ENCODE measurements at regions of chr11 and their contacts with region 1.

Region 1: GRCh38 chr11:85076373-85077330 is 550.5 kb downstream of the DLG2 start:
- DNase-seq: peak; percentile 83
- H3K4me3 ChIP-seq: no peak overlapping the region
- H3K27ac ChIP-seq: no peak overlapping the region
- H3K4me1 ChIP-seq: peaks cover 15% of the 10 kb centered on the region
- H3K27me3 ChIP-seq: peaks cover 16% of the 10 kb centered on the region
- CTCF ChIP-seq: no peak

Region 2: DNA sequence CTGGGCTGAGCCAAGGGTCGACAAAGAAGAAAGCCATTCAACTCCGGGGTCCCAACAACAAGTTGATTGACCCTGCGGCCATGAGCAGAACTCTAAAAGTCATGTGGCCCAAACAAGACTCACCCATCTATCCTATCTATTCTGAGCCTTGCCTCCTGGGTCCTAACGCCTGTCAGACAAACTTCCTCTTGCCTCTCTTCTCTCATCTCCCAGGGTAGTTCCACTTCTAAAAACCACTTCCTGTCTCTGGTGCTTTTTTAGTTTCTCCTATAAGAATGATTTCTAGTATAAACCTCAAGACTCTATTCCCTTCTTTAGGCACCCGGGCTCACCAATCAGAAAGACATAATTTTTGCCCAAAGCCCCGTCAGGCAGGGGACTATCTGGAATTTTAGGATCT is 20.3 kb after region 1 on chr11:
- CTCF ChIA-PET with region 1: interaction called, 21 read pairs
- dilution Hi-C with region 1: no loop called
- in situ Hi-C with region 1: no loop called
- intact Hi-C with region 1: no loop called
- DNase-seq: no peak
- H3K4me3 ChIP-seq: no peak overlapping the region
- H3K27ac ChIP-seq: no peak overlapping the region
- H3K4me1 ChIP-seq: no peaks in the 10 kb centered on the region
- H3K27me3 ChIP-seq: peaks cover 15% of the 10 kb centered on the region
- CTCF ChIP-seq: no peak

Region 3: GRCh38 chr11:85256433-85256832 is 179.8 kb after region 1 on chr11:
- CTCF ChIA-PET with region 1: no interaction called
- dilution Hi-C with region 1: no loop called
- in situ Hi-C with region 1: no loop called
- intact Hi-C with region 1: no loop called
- DNase-seq: no peak
- H3K4me3 ChIP-seq: no peak overlapping the region
- H3K27ac ChIP-seq: no peak overlapping the region
- H3K4me1 ChIP-seq: no peaks in the 10 kb centered on the region
- H3K27me3 ChIP-seq: no peaks in the 10 kb centered on the region
- CTCF ChIP-seq: no peak

Measured in mammary epithelial cell (primary cell).